ENCODE measurements at regions of chr3 and their contacts with region 1.

Region 1: DNA sequence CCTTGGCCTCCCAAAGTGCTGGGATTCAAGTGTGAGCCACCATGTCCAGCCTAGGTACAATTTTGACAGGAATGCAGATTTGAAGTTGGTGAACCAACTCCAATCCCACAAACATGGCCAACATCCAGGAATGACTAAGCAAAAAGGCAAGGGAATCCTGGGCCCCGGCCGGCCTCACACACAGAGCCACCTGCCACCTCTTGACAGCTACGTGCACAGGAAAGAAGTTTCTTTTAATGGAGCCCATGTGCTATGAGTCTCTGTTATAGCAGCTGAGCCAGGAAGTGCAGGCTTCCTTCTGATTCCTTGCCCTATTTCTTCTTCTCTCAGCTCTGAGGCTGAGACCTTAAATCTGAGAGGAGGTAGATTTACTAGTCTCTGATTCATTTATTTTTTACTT is 8.8 kb downstream of the TMEM40 start:
- DNase-seq: no peak
- ATAC-seq: peak; percentile 9
- H3K4me3 Mint-ChIP-seq: no peak overlapping the region
- H3K27ac Mint-ChIP-seq: peak overlapping the region; percentile 7
- H3K4me1 Mint-ChIP-seq: peaks cover 33% of the 10 kb centered on the region
- H3K27me3 Mint-ChIP-seq: peaks cover 1% of the 10 kb centered on the region
- CTCF ChIP-seq: no peak

Region 2: GRCh38 chr3:12796171-12797123 is 46.2 kb after region 1 on chr3 and contains the start of gene CAND2:
- CTCF ChIA-PET with region 1: no interaction called
- POLR2A ChIA-PET with region 1: no interaction called
- intact Hi-C with region 1: loop called (anchors 5 kb)
- DNase-seq: peak; percentile 46
- ATAC-seq: peak; percentile 78
- H3K4me3 Mint-ChIP-seq: peak within 1 kb of the TSS; percentile 87
- H3K27ac Mint-ChIP-seq: no peak within 1 kb of the TSS
- H3K4me1 Mint-ChIP-seq: peaks cover 20% of the 10 kb centered on the region
- H3K27me3 Mint-ChIP-seq: peaks cover 3% of the 10 kb centered on the region
- CTCF ChIP-seq: no peak
- total RNA-seq, gene CAND2: 0.22 and 0.42 TPM in 2 replicates

Measured in activated B cell treated with CpG ODN at 0.5 μM for 24 hours (primary cell).